Dorsolateral prefrontal cortex (tissue), 120 donors: ENCODE measurements at regions of chr3 and their contacts with region 1.

Region 1: GRCh38 chr3:184543843-184544512 is 17.6 kb upstream of the EPHB3 start:
- DNase-seq: peak in 8 of 10 donors; percentile 62 to 90 (median 78)
- H3K4me3 ChIP-seq: peak overlapping the region in 34 of 59 donors; percentile 4 to 50 (median 30)
- H3K27ac ChIP-seq: peak overlapping the region in 3 of 59 donors; percentile 8 to 46 (median 44)
- H3K27me3 ChIP-seq: peaks cover 0 to 7% (median 0%) of the 10 kb centered on the region in 45 donors
- CTCF ChIP-seq: peak; percentile 87 to 98 (median 94)

Region 2: GRCh38 chr3:183895296-183895695 is 648.7 kb before region 1 on chr3:
- intact Hi-C with region 1: loop called in 1 of 2 experiments (anchors 10 kb)
- DNase-seq: peak in 1 of 10 donors; percentile 24
- H3K4me3 ChIP-seq: peak overlapping the region in 1 of 59 donors; percentile 29
- H3K27ac ChIP-seq: no peak overlapping the region
- H3K27me3 ChIP-seq: no peaks in the 10 kb centered on the region
- CTCF ChIP-seq: peak; percentile 62 to 93 (median 82)

Region 3: DNA sequence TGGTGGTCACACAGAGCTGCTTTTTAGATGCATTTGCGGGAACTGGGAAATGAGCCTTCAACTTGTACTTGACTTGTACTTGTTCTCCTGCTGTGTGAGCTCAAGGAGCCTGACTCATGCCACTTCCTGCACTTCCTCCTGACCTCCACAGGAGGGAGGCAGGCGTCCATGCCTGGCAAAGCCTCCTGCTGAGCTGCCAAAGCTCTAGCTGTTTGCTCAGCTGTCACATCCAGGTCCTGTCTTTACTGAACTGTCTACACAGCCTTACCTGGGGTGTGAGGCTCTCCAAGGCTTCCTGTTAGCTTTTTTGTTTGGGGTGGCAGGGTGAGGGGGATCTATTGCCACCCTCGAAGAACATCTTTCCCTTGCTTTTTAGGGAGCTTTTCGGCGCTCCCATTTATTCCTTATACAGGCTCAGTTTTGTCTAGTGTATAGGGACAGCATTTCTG is 172.4 kb before region 1 on chr3:
- intact Hi-C with region 1: loop called (anchors 5 kb)
- DNase-seq: peak in 9 of 10 donors; percentile 65 to 87 (median 83)
- H3K4me3 ChIP-seq: no peak overlapping the region
- H3K27ac ChIP-seq: peak overlapping the region in 38 of 59 donors; percentile 0 to 66 (median 36)
- H3K27me3 ChIP-seq: no peaks in the 10 kb centered on the region
- CTCF ChIP-seq: peak; percentile 52 to 98 (median 90)

Region 4: GRCh38 chr3:184417619-184418327 is 126.2 kb before region 1 on chr3:
- intact Hi-C with region 1: loop called (anchors 5 kb)
- DNase-seq: peak; percentile 36 to 77 (median 58)
- H3K4me3 ChIP-seq: peak overlapping the region in 1 of 59 donors; percentile 43
- H3K27ac ChIP-seq: no peak overlapping the region
- H3K27me3 ChIP-seq: no peaks in the 10 kb centered on the region
- CTCF ChIP-seq: peak; percentile 61 to 90 (median 82)

Region 5: GRCh38 chr3:184469423-184469822 is 74.6 kb before region 1 on chr3:
- intact Hi-C with region 1: loop called (anchors 5 kb)
- DNase-seq: peak in 7 of 10 donors; percentile 9 to 63 (median 46)
- H3K4me3 ChIP-seq: no peak overlapping the region
- H3K27ac ChIP-seq: no peak overlapping the region
- H3K27me3 ChIP-seq: no peaks in the 10 kb centered on the region
- CTCF ChIP-seq: peak; percentile 15 to 69 (median 50)

Region 6: GRCh38 chr3:184977796-184978195 is 433.8 kb after region 1 on chr3:
- intact Hi-C with region 1: no loop called
- DNase-seq: no peak
- H3K4me3 ChIP-seq: no peak overlapping the region
- H3K27ac ChIP-seq: no peak overlapping the region
- H3K27me3 ChIP-seq: no peaks in the 10 kb centered on the region
- CTCF ChIP-seq: no peak